Activated CD4-positive, alpha-beta T cell treated with anti-CD3 and anti-CD28 coated beads, Interleukin-2, amount 10 ng/mL, durations not matched to agents 24 days and 14 days (primary cell): ENCODE measurements at regions of chr18 and their contacts with region 1.

Region 1: DNA sequence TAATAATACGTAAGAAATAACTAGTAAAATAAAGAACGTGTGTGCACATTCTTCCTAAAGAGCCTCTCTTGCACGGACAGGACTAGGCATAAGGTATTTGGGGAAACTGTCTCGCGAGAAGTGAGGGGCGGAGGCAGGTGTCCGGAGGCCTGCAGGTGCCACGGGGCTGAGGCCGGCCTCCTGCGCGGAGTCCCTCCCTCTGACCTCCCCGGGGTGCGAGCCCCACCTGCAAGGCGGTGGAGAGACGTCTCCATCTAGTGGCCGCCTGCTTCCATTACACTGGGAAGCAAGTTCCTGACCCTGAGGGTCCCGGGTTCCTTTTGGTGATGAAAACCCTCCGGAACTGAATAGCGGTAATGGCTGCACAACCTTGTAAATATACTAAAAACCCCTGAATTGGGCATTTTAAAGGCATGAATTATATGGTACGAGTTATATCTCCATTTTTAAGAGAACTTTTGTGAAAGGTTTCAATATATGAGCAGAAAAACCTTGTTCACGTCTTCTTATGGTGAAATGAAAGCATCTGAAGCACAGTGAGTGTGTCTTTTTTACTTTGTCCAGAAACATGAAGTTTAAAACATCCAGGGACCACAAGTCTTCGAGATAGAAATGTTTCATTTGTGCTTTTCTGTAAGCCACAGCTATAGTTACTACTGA is 35.5 kb upstream of the CTDP1 start:
- DNase-seq: peak; percentile 91
- H3K4me3 Mint-ChIP-seq: no peak overlapping the region
- H3K27ac Mint-ChIP-seq: no peak overlapping the region
- H3K4me1 Mint-ChIP-seq: no peaks in the 10 kb centered on the region
- H3K27me3 Mint-ChIP-seq: peaks cover 5% of the 10 kb centered on the region

Region 2: DNA sequence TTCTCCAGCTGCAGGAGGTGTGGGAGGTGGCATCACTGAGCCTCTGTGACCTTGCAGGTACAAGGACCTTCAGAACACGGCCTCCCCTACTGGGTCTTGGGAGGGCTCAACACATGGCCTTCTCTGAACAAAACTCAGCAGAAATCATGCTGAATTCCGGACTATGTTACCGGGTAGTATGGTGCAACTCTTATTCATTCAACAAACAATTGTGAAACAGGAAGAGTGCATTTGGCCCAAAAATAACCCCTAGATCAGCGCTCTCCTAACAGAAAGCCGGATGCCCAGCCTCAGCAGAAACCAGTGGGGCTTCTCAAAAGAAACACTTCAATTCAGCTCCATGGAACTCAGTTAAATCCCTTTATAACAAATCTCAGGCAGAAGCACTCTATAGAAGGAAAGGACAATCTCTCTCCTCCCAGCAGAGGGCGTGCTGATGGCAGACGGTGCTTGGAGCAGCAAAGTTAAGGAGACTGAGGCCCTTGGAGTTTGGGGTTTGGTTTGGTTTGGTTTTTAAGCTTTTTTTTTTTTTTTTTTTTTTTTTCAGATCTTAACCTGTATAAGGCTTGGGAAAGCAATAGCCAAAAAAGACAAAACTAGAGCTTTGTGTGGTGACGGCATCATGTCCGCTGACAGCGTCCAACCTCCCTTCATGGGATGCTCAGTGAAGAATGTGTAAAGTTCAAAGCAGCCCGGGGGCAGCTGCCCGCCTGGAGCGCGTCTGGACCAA is 768.7 kb before region 1 on chr18:
- intact Hi-C with region 1: loop called (anchors 5 kb)
- DNase-seq: peak; percentile 78
- H3K4me3 Mint-ChIP-seq: no peak overlapping the region
- H3K27ac Mint-ChIP-seq: no peak overlapping the region
- H3K4me1 Mint-ChIP-seq: no peaks in the 10 kb centered on the region
- H3K27me3 Mint-ChIP-seq: no peaks in the 10 kb centered on the region

Region 3: GRCh38 chr18:79378542-79379250 is 265.4 kb before region 1 on chr18:
- intact Hi-C with region 1: loop called (anchors 1 kb)
- DNase-seq: peak; percentile 95
- H3K4me3 Mint-ChIP-seq: peak overlapping the region; percentile 37
- H3K27ac Mint-ChIP-seq: no peak overlapping the region
- H3K4me1 Mint-ChIP-seq: peaks cover 9% of the 10 kb centered on the region
- H3K27me3 Mint-ChIP-seq: no peaks in the 10 kb centered on the region

Region 4: GRCh38 chr18:79528846-79529245 is 115.3 kb before region 1 on chr18:
- intact Hi-C with region 1: loop called (anchors 1 kb)
- DNase-seq: peak; percentile 93
- H3K4me3 Mint-ChIP-seq: no peak overlapping the region
- H3K27ac Mint-ChIP-seq: no peak overlapping the region
- H3K4me1 Mint-ChIP-seq: peaks cover 16% of the 10 kb centered on the region
- H3K27me3 Mint-ChIP-seq: no peaks in the 10 kb centered on the region

Region 5: DNA sequence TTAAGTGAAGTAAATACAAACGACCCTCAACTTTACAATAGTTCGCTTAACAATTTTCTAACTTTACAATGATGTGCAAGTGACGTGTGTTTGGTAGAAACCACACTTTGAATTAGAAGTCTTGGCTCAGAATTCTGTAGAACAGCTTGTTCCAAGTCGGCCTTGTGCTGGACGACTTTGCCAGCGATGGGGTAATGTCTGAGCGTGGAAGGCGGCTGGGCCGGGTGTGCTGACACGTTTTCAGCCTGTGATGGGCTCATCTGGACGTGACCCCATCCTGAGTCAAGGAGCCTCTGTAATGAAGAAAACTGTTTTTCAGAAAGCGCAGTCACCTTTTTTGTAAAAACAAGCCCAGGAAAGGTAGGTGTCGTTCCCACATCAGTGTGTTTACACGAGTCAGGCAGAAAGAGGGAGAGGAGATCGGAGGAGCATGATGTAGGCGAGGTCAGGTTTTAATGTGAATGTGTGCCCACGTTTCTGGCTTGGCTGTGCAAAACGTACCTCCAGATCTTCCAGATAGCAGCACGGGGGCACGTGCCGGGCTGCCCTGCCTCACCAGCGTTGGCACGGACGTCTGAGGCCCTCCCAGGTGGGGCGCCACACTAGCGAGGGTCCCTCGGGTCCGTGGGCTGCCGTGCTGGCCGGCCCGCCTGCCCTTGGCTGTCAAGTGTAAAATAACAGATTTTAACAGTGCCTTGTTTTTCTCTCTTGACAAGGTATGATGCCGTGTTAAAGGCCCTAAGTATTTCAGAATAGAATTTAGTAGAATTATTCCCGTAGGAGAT is 90.0 kb after region 1 on chr18:
- intact Hi-C with region 1: no loop called
- DNase-seq: no peak
- H3K4me3 Mint-ChIP-seq: no peak overlapping the region
- H3K27ac Mint-ChIP-seq: no peak overlapping the region
- H3K4me1 Mint-ChIP-seq: no peaks in the 10 kb centered on the region
- H3K27me3 Mint-ChIP-seq: no peaks in the 10 kb centered on the region